ENCODE measurements at regions of chr7 and their contacts with region 1.

Region 1: GRCh38 chr7:894164-894867 is 18.0 kb downstream of the GET4 start:
- DNase-seq: no peak
- H3K4me3 ChIP-seq: no peak overlapping the region
- H3K27ac ChIP-seq: no peak overlapping the region
- H3K4me1 ChIP-seq: no peaks in the 10 kb centered on the region
- H3K27me3 ChIP-seq: no peaks in the 10 kb centered on the region
- CTCF ChIP-seq: no peak
- POLR2A ChIP-seq: no peak

Region 2: DNA sequence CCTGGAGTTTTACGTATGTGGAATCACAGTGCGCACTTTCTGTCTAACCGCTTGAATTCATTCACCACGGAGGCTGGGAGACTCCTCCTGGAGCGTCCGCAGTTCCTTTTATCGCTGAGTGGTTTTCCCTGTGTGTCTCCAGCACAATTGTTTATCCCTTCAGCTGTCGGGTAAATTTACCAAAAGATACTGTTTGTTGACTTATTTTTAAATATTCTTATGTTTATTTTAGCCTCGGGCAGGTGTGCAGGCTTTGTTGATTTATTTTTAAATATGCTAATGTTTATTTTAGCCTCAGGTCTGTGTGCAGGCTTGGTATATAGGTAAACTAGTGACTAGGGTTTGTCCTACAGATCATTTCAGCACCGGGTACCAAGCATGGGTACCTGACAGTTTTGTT is 12.9 kb before region 1 on chr7:
- intact Hi-C with region 1: loop called (anchors 1 kb)
- DNase-seq: no peak
- H3K4me3 ChIP-seq: no peak overlapping the region
- H3K27ac ChIP-seq: no peak overlapping the region
- H3K4me1 ChIP-seq: peaks cover 63% of the 10 kb centered on the region
- H3K27me3 ChIP-seq: no peaks in the 10 kb centered on the region
- CTCF ChIP-seq: no peak
- POLR2A ChIP-seq: no peak

Region 3: GRCh38 chr7:1342090-1342640 is 447.8 kb after region 1 on chr7:
- intact Hi-C with region 1: no loop called
- DNase-seq: no peak
- H3K4me3 ChIP-seq: no peak overlapping the region
- H3K27ac ChIP-seq: no peak overlapping the region
- H3K4me1 ChIP-seq: no peaks in the 10 kb centered on the region
- H3K27me3 ChIP-seq: no peaks in the 10 kb centered on the region
- CTCF ChIP-seq: no peak
- POLR2A ChIP-seq: no peak